ENCODE measurements at regions of chr21 and their contacts with region 1.

Region 1: GRCh38 chr21:29372063-29372802 is 73.5 kb downstream of the BACH1 start:
- DNase-seq: peak; percentile 66
- ATAC-seq: peak; percentile 66
- H3K4me3 Mint-ChIP-seq: no peak overlapping the region
- H3K27ac Mint-ChIP-seq: peak overlapping the region; percentile 41
- H3K4me1 Mint-ChIP-seq: peaks cover 24% of the 10 kb centered on the region
- H3K27me3 Mint-ChIP-seq: no peaks in the 10 kb centered on the region
- CTCF ChIP-seq: peak; percentile 76

Region 2: DNA sequence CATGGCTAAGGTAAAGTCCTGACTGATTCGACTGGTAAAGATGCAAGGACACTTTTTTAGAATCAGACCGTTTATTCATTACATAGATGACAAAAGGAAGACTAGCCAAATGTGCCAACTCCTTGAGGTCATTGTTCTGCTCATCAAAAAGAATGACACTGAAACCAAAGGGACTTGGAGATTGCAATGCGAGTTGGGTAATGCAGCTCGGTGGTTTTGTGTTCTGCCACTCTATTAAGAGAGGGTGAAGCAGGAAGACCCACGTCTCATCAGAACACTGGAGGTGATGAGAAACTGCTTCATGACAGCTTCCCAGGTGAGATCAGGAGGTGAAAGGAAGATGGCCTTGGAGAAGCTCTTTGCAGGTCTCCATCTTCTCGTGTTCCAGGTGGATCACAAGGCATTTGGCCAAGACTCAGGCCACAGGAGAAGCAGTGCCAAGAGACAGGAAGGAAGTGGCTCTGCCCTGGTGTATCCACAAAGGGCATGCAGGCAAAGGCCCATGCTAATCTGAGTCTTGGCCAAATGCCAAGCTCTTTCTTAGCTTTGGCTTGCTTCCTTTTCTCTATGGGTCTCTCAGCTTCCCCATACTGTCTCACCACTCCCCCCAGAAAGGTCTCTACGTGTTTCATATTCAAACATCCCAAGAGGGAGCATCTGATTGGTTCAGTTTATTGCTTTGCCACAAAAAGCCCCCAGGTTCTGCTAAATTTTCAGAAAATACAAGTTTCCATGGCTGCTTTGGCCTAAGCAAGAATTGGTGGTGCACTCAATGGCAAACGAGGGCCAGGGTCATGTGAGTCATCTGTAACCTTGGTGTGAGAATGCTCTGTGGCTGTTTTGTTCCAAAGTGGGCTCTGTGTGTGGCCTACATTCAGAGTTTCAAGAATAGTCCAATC is 293.1 kb before region 1 on chr21:
- CTCF ChIA-PET with region 1: interaction called, 11 read pairs
- POLR2A ChIA-PET with region 1: interaction called, 5 read pairs
- intact Hi-C with region 1: no loop called
- DNase-seq: peak; percentile 75
- ATAC-seq: peak; percentile 70
- H3K4me3 Mint-ChIP-seq: peak overlapping the region; percentile 75
- H3K27ac Mint-ChIP-seq: peak overlapping the region; percentile 95
- H3K4me1 Mint-ChIP-seq: peaks cover 52% of the 10 kb centered on the region
- H3K27me3 Mint-ChIP-seq: no peaks in the 10 kb centered on the region
- CTCF ChIP-seq: no peak

Region 3: DNA sequence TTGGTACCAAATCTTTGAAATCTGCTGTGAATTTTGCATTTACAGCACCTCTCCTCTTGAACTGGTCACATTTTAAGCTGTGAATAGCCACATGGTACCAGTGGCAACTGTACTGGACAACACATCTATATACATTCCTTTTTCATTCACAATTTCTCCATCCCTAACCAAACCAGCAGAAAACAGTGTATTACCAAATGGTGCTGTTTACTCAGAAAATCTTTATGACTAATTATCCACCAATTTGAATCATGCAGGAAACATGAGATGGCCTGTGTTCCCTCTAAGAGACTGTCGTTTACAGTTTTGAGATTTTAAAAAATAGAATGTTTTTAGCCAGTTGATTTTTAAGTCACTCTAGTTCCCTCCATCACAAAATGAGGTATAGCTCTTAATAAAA is 281.2 kb before region 1 on chr21:
- CTCF ChIA-PET with region 1: interaction called, 30 read pairs
- POLR2A ChIA-PET with region 1: no interaction called
- intact Hi-C with region 1: loop called (anchors 5 kb)
- DNase-seq: no peak
- ATAC-seq: no peak
- H3K4me3 Mint-ChIP-seq: no peak overlapping the region
- H3K27ac Mint-ChIP-seq: no peak overlapping the region
- H3K4me1 Mint-ChIP-seq: peaks cover 2% of the 10 kb centered on the region
- H3K27me3 Mint-ChIP-seq: no peaks in the 10 kb centered on the region
- CTCF ChIP-seq: no peak

Region 4: GRCh38 chr21:29232601-29233546 is 139.4 kb before region 1 on chr21:
- CTCF ChIA-PET with region 1: interaction called, 10 read pairs
- POLR2A ChIA-PET with region 1: no interaction called
- intact Hi-C with region 1: loop called (anchors 5 kb)
- DNase-seq: peak; percentile 7
- ATAC-seq: no peak
- H3K4me3 Mint-ChIP-seq: no peak overlapping the region
- H3K27ac Mint-ChIP-seq: peak overlapping the region; percentile 47
- H3K4me1 Mint-ChIP-seq: peaks cover 41% of the 10 kb centered on the region
- H3K27me3 Mint-ChIP-seq: peaks cover 2% of the 10 kb centered on the region
- CTCF ChIP-seq: no peak

Region 5: DNA sequence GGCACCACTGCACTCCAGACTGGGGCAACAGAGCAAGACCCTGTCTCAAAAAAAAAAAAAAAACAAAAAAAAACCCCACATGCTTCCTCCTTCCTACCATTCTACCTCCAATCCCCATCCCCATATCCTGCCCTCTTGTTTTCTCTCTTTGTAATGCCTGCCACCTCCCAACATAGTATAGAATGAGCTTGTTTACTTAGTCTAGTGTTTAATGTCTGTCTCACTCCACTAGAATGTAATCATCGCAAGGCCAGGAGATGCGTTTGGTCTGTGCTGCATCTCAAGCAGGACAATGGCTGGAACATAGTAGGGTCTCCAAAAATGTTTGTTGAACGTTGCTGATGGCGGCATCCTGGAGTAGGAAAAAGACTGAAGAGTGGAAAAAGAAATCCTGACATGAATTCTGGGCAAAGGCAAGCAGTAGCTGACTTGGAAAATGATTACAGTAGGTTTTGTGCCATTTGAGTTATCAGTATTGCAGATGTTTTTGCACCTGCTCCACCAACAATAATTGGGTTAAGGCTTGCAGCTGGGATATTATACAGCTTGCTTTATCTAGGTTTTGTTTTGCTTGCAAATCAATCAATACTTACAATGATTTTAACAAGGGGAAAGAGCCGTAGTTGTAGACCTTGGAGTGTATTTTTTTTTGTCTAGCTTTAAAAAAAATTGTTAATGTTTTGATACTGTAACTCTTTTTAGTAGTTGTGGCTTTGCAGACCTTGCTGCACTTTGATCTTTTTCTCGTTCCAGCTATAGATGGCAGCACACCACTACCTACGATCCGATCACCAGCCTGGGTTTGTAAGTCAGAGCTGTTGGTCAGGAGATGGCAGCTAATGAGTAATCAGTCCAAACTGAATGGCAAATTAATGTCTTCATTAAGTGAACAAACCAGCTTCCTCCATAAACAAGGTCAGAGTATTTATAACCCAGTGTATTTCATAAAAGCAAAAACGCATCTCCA is 11.2 kb before region 1 on chr21:
- CTCF ChIA-PET with region 1: interaction called, 13 read pairs
- POLR2A ChIA-PET with region 1: interaction called, 3 read pairs
- intact Hi-C with region 1: no loop called
- DNase-seq: peak; percentile 23
- ATAC-seq: no peak
- H3K4me3 Mint-ChIP-seq: no peak overlapping the region
- H3K27ac Mint-ChIP-seq: no peak overlapping the region
- H3K4me1 Mint-ChIP-seq: peaks cover 12% of the 10 kb centered on the region
- H3K27me3 Mint-ChIP-seq: no peaks in the 10 kb centered on the region
- CTCF ChIP-seq: no peak

Region 6: GRCh38 chr21:29453511-29453910 is 81.3 kb after region 1 on chr21:
- CTCF ChIA-PET with region 1: no interaction called
- POLR2A ChIA-PET with region 1: no interaction called
- intact Hi-C with region 1: no loop called
- DNase-seq: no peak
- ATAC-seq: no peak
- H3K4me3 Mint-ChIP-seq: no peak overlapping the region
- H3K27ac Mint-ChIP-seq: no peak overlapping the region
- H3K4me1 Mint-ChIP-seq: peaks cover 32% of the 10 kb centered on the region
- H3K27me3 Mint-ChIP-seq: no peaks in the 10 kb centered on the region
- CTCF ChIP-seq: no peak

Measured in activated CD8-positive, alpha-beta T cell treated with anti-CD3 and anti-CD28 coated beads for 36 hours (primary cell).